Esophagus muscularis mucosa (tissue), 4 donors: ENCODE measurements at regions of chr14 and their contacts with region 1.

Region 1: DNA sequence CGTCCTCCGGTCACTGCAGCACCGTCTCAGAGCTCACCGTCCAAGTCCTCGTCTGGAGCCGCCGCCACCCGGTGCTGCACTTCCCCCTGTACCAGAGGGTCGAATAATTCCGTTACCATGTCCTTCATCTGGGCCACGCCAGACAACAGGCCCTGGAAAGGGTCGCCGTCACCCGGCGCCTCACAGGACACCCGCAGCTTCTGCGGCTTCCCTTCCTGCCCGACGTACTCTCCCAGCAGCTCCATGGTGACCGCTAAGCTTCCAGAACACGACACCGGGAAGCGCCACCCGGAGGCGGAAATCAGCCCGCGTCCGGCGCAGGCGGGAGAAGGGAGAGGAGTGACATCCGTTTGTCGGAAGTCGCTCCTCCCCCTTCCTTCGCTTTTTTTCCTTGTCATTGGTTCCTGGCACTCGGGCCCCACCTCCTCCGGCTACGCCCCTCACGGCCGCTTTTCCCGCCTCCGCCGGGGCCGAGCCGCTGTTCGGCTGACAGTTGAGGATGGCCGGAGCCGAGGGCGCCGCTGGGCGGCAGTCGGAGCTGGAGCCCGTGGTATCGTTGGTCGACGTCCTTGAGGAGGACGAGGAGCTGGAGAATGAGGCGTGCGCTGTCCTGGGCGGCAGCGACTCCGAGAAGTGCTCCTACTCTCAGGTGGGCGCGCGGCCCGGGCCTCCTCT is at the starts of genes GON7 and UBR7:
- DNase-seq: peak; percentile 98
- H3K4me3 ChIP-seq: peak within 1 kb of the TSS; percentile 75 to 96 (median 87)
- H3K27ac ChIP-seq: peak within 1 kb of the TSS; percentile 79 to 97 (median 92)
- H3K4me1 ChIP-seq: peaks cover 18 to 46% (median 37%) of the 10 kb centered on the region in 4 donors
- H3K27me3 ChIP-seq: no peaks in the 10 kb centered on the region
- CTCF ChIP-seq: peak in 2 of 3 experiments; percentile 29 to 35
- EP300 ChIP-seq: peak; percentile 53
- POLR2A ChIP-seq: no peak
- total RNA-seq, gene GON7: 6.1 to 14.5 (median 11.6) TPM
- total RNA-seq, gene UBR7: 26.2 to 33.6 (median 29.9) TPM

Region 2: DNA sequence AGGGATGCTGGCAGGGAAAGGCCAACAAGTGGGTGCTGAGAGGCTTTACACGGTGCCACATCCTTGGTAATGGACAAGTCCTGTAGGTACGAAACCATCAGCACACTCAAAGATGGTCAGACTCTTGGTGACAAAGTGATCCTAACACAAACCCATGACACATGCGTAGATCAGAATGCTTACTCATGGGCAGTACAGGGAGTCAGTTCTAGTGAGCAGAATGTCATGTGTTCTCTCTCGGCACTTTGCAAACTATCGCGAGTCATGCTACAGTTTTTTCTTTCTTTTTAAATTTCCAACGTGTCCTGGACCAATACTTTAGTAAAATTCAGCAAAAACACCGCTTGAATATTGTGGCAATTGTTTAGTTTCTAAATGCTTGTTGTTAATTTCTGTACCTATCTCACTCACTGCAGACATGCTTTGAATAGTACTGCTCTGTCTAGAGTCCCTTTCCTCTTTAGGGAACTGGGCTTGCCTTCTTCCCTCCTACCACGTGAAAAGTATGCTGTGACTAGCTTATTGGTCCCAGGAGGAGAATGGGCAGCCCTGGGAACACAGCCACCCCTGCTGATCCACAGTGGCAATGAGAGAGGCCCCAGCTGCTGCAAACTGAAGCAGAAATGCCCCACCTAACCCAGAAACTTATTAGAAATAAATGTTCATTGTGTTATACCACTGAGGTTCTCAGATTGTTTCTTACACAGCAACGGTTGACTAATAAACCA is 62.6 kb after region 1 on chr14:
- intact Hi-C with region 1: no loop called
- DNase-seq: no peak
- H3K4me3 ChIP-seq: no peak overlapping the region
- H3K27ac ChIP-seq: no peak overlapping the region
- H3K4me1 ChIP-seq: peaks cover 0 to 8% (median 5%) of the 10 kb centered on the region in 4 donors
- H3K27me3 ChIP-seq: no peaks in the 10 kb centered on the region
- CTCF ChIP-seq: no peak
- EP300 ChIP-seq: no peak
- POLR2A ChIP-seq: no peak

Region 3: DNA sequence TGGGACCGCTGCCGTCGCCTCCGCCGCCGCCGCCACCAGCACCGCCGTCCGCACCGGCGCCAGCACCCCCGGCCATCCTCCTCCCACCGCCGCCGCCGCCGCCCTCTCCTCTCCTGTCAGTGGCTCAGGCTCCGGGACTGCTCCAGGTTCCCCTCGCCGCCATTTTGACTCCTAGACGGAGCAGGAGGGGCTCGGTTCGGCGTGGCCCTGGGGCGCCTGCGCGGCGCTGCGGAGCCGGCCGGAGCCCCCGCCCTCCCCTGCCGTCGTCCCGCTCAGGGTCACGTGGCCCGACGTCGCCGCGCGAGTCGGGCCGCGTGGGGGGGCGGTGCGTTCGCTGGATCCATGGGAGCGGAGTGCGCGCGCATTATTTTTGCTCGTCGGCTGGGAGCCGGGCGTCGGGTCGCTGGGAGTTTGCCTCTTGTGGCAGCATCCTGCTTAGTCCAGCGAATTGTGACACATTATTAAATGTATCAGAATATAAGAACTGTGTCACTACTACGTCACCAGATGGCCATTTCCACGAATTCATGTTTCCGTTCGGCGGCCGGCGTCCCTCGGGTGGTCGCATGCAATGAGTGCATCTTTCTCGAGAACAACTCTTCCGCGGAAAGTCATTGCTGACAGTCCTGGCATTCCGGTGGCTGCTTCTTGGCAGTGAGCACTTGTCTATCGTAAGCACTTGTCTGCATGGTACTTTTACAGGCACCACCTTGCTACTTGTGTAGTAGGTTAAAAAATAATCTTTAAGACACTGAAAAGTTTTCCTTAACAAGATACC is 126.1 kb after region 1 on chr14 and contains the start of gene BTBD7:
- intact Hi-C with region 1: loop called (anchors 5 kb)
- DNase-seq: peak; percentile 98
- H3K4me3 ChIP-seq: peak within 1 kb of the TSS; percentile 92 to 97 (median 95)
- H3K27ac ChIP-seq: peak within 1 kb of the TSS; percentile 97 to 99 (median 98)
- H3K4me1 ChIP-seq: peaks cover 25 to 40% (median 38%) of the 10 kb centered on the region in 4 donors
- H3K27me3 ChIP-seq: no peaks in the 10 kb centered on the region
- CTCF ChIP-seq: peak in 1 of 3 experiments; percentile 34
- EP300 ChIP-seq: no peak
- POLR2A ChIP-seq: no peak
- total RNA-seq, gene BTBD7: 28.8 to 35.7 (median 30.1) TPM